AG04449 (cell line): ENCODE measurements at regions of chr2 and their contacts with region 1.

Region 1: GRCh38 chr2:151808258-151809072 is 19.8 kb downstream of the ARL5A start:
- DNase-seq: no peak
- H3K4me3 ChIP-seq: no peak overlapping the region
- CTCF ChIP-seq: peak; percentile 22

Region 2: DNA sequence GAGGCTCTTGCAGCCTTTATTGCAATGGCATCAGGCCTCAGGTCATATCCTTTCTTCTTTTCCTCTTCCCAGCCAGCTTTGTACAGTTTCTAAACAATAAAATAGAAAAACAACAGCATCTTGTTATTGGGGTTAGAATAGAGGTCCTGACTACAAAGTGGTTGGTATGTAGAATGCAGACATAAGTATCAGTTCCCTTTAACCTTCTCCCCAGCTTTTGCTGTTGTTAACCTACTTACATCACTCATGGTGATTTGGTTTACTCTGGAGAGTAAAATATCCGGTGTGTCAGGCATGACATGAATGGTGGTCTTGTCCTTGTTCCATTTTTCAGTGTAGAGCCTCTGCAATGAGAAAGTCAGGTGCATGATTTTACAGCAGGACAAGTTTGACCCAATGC is 143.9 kb before region 1 on chr2:
- CTCF ChIA-PET with region 1: no interaction called
- POLR2A ChIA-PET with region 1: no interaction called
- DNase-seq: no peak
- H3K4me3 ChIP-seq: no peak overlapping the region
- CTCF ChIP-seq: no peak

Region 3: GRCh38 chr2:151819920-151820319 is 11.5 kb after region 1 on chr2:
- CTCF ChIA-PET with region 1: interaction called, 21 read pairs
- POLR2A ChIA-PET with region 1: no interaction called
- DNase-seq: no peak
- H3K4me3 ChIP-seq: no peak overlapping the region
- CTCF ChIP-seq: no peak